HEK293 (cell line): ENCODE measurements at regions of chr9 and their contacts with region 1.

Region 1: DNA sequence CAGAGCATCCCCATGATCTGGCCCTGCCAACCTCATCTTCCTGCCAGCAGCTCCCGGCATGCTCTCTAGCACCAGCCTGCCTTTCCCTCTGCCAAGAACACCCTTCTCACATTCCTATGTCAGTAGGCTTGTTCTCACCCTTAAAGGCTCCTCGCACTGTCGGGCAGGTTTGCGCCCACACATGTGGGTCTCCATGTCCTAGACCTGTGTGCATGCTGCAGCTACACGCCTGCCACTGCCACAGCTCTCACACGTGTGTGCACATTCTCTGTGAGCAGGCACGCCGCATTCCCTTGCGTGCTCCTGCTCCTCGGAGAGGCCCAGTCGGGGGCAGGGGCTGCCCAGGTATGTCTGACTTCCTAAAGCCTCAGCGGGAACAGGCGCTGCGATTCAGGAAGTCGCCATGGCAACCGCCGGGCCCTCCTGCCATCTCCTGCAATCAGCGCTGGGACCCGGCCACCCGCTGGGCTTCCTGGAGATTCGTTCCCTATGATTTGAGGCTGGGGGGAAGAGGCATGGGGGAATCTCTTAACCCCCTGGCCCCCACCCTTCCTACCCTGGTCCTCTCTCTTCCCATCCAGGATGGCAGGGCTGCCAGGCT is 28.1 kb downstream of the NDUFA8 start:
- H3K4me3 ChIP-seq: no peak overlapping the region
- H3K27ac ChIP-seq: no peak overlapping the region
- H3K4me1 ChIP-seq: 0 out of 2 replicates have a peak, but pooled peaks cover 3% of the 10 kb centered on the region
- CTCF ChIP-seq: no peak

Region 2: DNA sequence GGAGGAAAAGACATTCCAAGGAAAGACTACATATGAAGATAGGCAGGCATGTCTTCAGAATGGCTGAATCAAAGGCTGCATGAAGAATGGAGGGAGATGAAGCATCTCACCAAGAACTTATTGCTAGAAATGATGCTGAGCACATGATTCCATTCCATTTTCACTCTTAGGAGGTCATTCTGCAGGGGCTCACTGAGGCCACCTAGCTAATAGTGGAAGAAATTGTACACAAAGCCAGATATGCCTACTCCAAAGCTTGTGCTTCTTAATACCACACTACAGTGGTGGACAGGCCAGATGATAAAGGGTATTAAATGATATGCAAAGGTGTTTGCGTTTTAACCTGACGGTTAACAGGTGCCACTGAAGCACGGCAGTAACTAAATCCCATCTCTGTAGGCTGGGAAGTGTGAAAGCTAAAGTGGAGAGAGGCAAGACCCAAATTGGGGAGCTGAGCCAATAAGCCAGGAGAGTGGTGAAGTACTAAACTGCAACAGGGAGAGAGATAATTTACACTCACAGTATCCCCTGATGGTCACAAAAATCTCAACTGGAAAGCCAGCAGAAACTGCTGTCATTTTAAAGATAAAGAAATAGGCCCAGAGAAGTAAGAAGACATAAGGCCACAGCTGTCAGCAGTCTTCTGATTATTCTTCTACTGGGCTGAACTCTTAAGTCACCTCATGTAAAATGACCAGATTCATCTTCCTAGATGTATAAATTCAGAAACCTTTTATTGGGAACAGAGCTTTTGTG is 13.5 kb after region 1 on chr9:
- CTCF ChIA-PET with region 1: interaction called, 30 read pairs
- POLR2A ChIA-PET with region 1: interaction called, 3 read pairs
- H3K4me3 ChIP-seq: no peak overlapping the region
- H3K27ac ChIP-seq: no peak overlapping the region
- H3K4me1 ChIP-seq: no peaks in the 10 kb centered on the region
- CTCF ChIP-seq: no peak